ENCODE measurements at regions of chr2 and their contacts with region 1.

Region 1: DNA sequence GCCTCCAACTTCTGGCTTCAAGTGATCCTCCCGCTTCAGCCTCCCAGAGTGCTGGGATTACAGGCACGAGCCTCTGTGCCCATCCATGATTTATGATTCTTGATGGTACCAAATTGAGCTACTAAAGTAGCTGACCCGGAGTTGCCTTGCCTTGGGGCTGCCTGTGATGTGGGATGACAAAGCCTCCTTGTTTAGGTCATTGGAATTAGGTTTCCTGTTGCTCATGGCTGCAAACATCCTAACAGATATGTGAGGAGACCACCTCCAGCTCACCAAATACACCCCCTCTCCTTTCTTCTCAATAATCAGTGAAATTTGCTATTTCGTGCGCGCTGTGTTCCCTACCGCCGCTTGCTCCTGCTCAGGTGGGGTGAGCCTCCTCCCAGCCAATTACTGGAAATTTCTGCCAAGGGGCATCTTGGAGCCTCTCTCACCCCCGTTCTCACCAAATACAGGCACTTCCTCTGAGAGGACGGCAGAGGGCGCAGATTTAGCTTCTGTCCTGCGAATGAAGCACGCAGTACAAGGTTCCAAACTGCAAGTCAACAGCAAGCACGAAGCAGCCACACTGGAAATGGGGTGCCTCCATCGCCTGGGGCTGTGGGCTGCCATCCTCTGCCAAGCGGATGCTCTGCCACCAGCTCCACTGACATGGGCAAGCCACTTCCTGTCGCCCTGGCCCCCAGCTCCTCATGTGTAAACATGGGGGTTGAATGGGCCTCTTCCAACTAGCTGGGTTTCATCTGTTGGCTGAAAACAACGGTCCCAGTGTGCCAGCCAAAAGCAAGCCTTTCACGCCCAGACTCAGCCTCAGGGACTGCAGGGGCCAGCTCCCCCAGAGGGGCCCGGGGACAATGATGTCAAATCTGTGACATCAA is 71.7 kb downstream of the NCAPH start:
- DNase-seq: peak; percentile 58
- H3K4me3 Mint-ChIP-seq: no peak overlapping the region
- H3K27ac Mint-ChIP-seq: peak overlapping the region; percentile 72
- H3K4me1 Mint-ChIP-seq: peaks cover 22% of the 10 kb centered on the region
- H3K27me3 Mint-ChIP-seq: peaks cover 5% of the 10 kb centered on the region

Region 2: GRCh38 chr2:96305091-96305978 is 101.9 kb before region 1 on chr2 and contains the start of gene SNRNP200:
- intact Hi-C with region 1: no loop called
- DNase-seq: peak; percentile 87
- H3K4me3 Mint-ChIP-seq: peak within 1 kb of the TSS; percentile 99
- H3K27ac Mint-ChIP-seq: peak within 1 kb of the TSS; percentile 96
- H3K4me1 Mint-ChIP-seq: peaks cover 45% of the 10 kb centered on the region
- H3K27me3 Mint-ChIP-seq: no peaks in the 10 kb centered on the region
- total RNA-seq, gene SNRNP200: 192 and 196 TPM in 2 replicates

Region 3: GRCh38 chr2:96470636-96471035 is 63.4 kb after region 1 on chr2:
- intact Hi-C with region 1: loop called (anchors 1 kb)
- DNase-seq: peak; percentile 28
- H3K4me3 Mint-ChIP-seq: peak overlapping the region; percentile 2
- H3K27ac Mint-ChIP-seq: no peak overlapping the region
- H3K4me1 Mint-ChIP-seq: peaks cover 16% of the 10 kb centered on the region
- H3K27me3 Mint-ChIP-seq: peaks cover 4% of the 10 kb centered on the region

Region 4: GRCh38 chr2:96554293-96555145 is 147.2 kb after region 1 on chr2:
- intact Hi-C with region 1: loop called (anchors 1 kb)
- DNase-seq: peak; percentile 56
- H3K4me3 Mint-ChIP-seq: no peak overlapping the region
- H3K27ac Mint-ChIP-seq: peak overlapping the region; percentile 34
- H3K4me1 Mint-ChIP-seq: peaks cover 23% of the 10 kb centered on the region
- H3K27me3 Mint-ChIP-seq: no peaks in the 10 kb centered on the region

Region 5: GRCh38 chr2:96608469-96609455 is 201.5 kb after region 1 on chr2:
- intact Hi-C with region 1: no loop called
- DNase-seq: no peak
- H3K4me3 Mint-ChIP-seq: no peak overlapping the region
- H3K27ac Mint-ChIP-seq: peak overlapping the region; percentile 35
- H3K4me1 Mint-ChIP-seq: peaks cover 25% of the 10 kb centered on the region
- H3K27me3 Mint-ChIP-seq: no peaks in the 10 kb centered on the region

Region 6: DNA sequence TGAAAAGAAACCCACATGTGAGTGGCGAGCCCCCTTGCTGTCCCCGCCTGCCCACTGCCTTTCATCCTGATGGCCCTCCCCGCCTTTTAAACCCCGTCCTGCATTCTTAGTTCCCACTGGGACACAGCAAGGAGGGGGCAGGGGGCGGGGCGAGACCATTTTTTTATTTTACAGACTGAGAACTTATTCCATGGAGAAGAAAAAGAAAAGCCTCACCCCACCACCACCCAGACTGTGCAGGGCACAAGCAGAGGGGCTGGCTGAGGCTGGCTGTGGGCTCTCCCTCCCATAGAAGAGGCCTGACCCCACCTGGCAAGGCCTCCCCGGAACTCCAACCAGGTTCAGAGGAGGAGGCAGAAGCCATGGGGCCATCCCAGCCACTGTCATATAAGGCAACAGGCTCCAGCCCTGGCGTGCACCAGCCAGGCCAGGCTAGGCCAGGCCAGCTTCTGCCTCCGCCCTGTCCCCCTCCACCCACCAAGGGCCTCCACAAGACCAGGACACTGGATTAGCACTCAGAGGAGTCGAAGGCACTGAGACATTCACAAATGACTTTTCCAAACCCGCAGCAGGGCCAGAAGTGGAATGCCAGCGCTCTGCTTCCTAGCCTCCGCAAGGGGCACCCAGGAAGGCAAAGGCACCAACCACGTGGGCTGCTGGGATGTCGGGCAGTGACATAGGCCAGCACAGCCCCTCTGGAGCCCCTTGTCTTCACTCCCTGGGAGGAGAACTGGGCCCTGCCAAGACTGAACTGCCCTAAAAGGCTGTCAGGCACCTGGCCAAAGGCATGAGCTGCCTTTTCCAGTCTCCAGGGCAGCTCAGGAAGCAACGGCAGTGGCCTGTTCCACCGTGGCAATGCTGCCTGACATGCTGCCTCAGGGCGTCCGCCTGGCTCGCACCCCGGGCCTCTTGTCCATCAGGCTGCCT is 500.1 kb after region 1 on chr2:
- intact Hi-C with region 1: no loop called
- DNase-seq: no peak
- H3K4me3 Mint-ChIP-seq: no peak overlapping the region
- H3K27ac Mint-ChIP-seq: no peak overlapping the region
- H3K4me1 Mint-ChIP-seq: peaks cover 4% of the 10 kb centered on the region
- H3K27me3 Mint-ChIP-seq: no peaks in the 10 kb centered on the region